ENCODE measurements at regions of chr6 and their contacts with region 1.

Region 1: GRCh38 chr6:2103644-2104523 is 141.5 kb downstream of the GMDS start:
- DNase-seq: peak; percentile 71
- ATAC-seq: peak; percentile 90
- H3K4me3 ChIP-seq: no peak overlapping the region
- H3K27ac ChIP-seq: no peak overlapping the region
- H3K4me1 ChIP-seq: peaks cover 4% of the 10 kb centered on the region; the same call in 1 of the 2 replicates
- H3K27me3 ChIP-seq: no peaks in the 10 kb centered on the region
- CTCF ChIP-seq: peak; percentile 85

Region 2: GRCh38 chr6:1609648-1610496 is 494.0 kb before region 1 on chr6 and contains the start of gene FOXC1:
- CTCF ChIA-PET with region 1: interaction called, 6 read pairs
- POLR2A ChIA-PET with region 1: no interaction called
- intact Hi-C with region 1: loop called (anchors 1 kb)
- DNase-seq: peak; percentile 97
- ATAC-seq: peak; percentile 80
- H3K4me3 ChIP-seq: peak within 1 kb of the TSS; percentile 80
- H3K27ac ChIP-seq: peak within 1 kb of the TSS; percentile 59
- H3K4me1 ChIP-seq: peaks cover 4% of the 10 kb centered on the region; the same call in 1 of the 2 replicates
- H3K27me3 ChIP-seq: no peaks in the 10 kb centered on the region
- CTCF ChIP-seq: no peak
- total RNA-seq, gene FOXC1: 7.3 and 12.0 TPM in 2 replicates

Region 3: GRCh38 chr6:1817033-1817761 is 286.7 kb before region 1 on chr6:
- CTCF ChIA-PET with region 1: interaction called, 11 read pairs
- POLR2A ChIA-PET with region 1: no interaction called
- intact Hi-C with region 1: no loop called
- DNase-seq: no peak
- ATAC-seq: peak; percentile 64
- H3K4me3 ChIP-seq: no peak overlapping the region
- H3K27ac ChIP-seq: no peak overlapping the region
- H3K4me1 ChIP-seq: no peaks in the 10 kb centered on the region
- H3K27me3 ChIP-seq: no peaks in the 10 kb centered on the region
- CTCF ChIP-seq: no peak

Region 4: GRCh38 chr6:1917626-1918371 is 186.1 kb before region 1 on chr6:
- CTCF ChIA-PET with region 1: no interaction called
- POLR2A ChIA-PET with region 1: no interaction called
- intact Hi-C with region 1: loop called (anchors 10 kb)
- DNase-seq: peak; percentile 97
- ATAC-seq: peak; percentile 94
- H3K4me3 ChIP-seq: no peak overlapping the region
- H3K27ac ChIP-seq: peak overlapping the region; percentile 80
- H3K4me1 ChIP-seq: peaks cover 26% of the 10 kb centered on the region
- H3K27me3 ChIP-seq: no peaks in the 10 kb centered on the region
- CTCF ChIP-seq: no peak

Region 5: DNA sequence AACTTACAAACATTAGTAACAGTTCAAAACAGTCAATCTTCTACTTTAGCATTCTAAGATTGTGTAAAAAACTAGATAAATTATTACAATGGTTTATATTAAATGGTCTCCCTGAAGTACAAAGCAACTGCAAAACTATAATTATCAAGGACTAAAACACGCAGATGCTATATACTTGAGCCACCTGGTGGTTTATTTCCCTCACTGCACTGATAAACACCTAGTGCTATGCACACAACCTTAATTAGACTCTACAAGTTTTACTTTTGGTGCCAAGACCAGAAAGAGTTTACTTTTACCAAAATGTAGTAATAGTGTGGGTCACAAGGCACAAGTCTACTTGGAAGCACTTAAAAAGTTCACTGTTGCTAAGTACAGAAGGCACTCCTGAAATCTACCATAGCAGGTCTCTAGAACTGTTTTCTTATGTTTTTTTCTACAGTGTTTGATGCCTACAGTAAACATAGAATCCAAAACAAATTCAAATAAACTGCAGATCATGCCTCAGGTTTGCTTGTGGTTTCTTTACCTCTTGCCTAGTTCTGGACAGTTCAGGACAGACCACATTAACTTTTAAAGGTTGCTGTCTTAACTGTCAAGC is 92.3 kb after region 1 on chr6:
- CTCF ChIA-PET with region 1: no interaction called
- POLR2A ChIA-PET with region 1: interaction called, 4 read pairs
- intact Hi-C with region 1: loop called (anchors 2 kb)
- DNase-seq: peak; percentile 76
- ATAC-seq: peak; percentile 43
- H3K4me3 ChIP-seq: no peak overlapping the region
- H3K27ac ChIP-seq: no peak overlapping the region; the same call in 1 of the 2 replicates
- H3K4me1 ChIP-seq: peaks cover 21% of the 10 kb centered on the region
- H3K27me3 ChIP-seq: no peaks in the 10 kb centered on the region
- CTCF ChIP-seq: peak; percentile 89

Region 6: DNA sequence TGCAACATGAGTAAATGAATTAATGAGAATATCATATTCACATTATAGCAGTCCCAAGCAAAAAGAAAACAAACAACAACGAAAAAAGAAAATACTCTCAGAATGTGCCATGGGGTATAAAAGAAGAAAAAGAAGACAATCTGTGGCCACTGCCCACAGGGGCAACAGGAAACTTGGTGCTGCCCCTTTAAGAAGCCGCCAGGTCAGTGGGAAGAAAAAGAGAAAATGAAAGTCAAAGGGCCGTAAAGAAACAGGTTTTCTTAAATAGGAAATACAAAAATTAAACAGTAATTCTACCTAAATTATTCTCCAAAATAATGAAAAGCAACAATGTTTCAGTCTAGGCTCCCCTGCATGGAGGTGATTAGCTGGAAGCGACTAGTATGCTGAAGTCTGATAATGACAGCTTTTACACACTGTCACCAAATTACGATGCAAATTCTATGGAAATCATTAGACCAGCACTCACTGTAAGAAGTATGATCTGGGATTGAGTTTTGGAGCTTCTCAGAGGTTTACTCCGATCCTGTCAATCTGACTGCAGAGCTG is 117.9 kb after region 1 on chr6:
- CTCF ChIA-PET with region 1: no interaction called
- POLR2A ChIA-PET with region 1: no interaction called
- intact Hi-C with region 1: no loop called
- DNase-seq: no peak
- ATAC-seq: no peak
- H3K4me3 ChIP-seq: no peak overlapping the region
- H3K27ac ChIP-seq: no peak overlapping the region
- H3K4me1 ChIP-seq: peaks cover 41% of the 10 kb centered on the region
- H3K27me3 ChIP-seq: no peaks in the 10 kb centered on the region
- CTCF ChIP-seq: no peak